B cell (primary cell): ENCODE measurements at regions of chr20 and their contacts with region 1.

Region 1: DNA sequence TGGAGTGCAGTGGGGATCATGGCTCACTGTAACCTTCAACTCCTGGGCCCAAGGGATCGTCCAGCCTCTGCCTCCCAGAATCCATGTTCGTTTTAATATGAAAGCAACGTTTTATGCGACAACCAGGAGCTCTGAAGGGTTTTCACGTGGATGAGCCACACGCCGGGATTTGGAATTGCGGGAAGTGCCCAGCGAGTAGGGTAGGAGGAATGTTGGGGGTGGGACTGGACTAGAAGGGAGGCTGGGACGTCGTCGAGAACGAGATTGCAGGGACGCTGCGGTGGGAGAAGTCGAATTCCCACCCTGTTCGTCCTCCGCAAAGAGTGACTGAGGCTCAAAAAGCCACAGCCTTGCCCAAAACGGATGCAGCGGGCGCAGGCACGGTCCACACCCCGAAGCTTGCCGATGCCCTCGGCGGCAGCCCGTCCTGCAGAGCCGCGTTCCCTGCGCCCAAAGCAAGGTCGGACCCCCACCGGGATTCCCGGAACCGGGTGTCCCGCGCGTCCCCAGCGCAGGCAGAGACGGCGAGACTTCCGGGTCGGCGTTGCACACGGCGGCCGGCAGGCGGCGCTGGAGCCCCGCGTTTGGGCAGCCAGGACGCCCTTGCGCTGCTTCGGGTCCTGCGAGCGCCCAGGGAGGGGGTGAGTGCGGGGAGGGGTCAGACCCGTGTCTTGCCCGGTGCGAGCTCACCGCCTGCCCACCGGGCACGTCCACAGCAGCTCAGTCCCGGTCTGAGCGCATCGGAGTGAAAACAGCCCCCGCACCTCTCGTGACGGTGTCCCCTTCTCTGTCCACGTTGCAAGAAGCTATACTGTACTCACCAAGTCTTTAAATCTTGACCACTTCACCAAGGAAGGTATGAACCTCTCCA is 87.8 kb downstream of the DHX35 start:
- DNase-seq: peak; percentile 87
- ATAC-seq: peak; percentile 89
- H3K4me3 ChIP-seq: peak overlapping the region; percentile 57 to 86 (median 68)
- H3K4me3 Mint-ChIP-seq: peak overlapping the region; percentile 88
- H3K27ac ChIP-seq: peak overlapping the region in 1 of 2 donors; percentile 67
- H3K27ac Mint-ChIP-seq: peak overlapping the region; percentile 46
- H3K4me1 ChIP-seq: peaks cover 8 to 12% of the 10 kb centered on the region in 2 donors
- H3K4me1 Mint-ChIP-seq: peaks cover 10% of the 10 kb centered on the region
- H3K27me3 ChIP-seq: no peaks in the 10 kb centered on the region
- H3K27me3 Mint-ChIP-seq: peaks cover 10% of the 10 kb centered on the region
- CTCF ChIP-seq: peak; percentile 99

Region 2: DNA sequence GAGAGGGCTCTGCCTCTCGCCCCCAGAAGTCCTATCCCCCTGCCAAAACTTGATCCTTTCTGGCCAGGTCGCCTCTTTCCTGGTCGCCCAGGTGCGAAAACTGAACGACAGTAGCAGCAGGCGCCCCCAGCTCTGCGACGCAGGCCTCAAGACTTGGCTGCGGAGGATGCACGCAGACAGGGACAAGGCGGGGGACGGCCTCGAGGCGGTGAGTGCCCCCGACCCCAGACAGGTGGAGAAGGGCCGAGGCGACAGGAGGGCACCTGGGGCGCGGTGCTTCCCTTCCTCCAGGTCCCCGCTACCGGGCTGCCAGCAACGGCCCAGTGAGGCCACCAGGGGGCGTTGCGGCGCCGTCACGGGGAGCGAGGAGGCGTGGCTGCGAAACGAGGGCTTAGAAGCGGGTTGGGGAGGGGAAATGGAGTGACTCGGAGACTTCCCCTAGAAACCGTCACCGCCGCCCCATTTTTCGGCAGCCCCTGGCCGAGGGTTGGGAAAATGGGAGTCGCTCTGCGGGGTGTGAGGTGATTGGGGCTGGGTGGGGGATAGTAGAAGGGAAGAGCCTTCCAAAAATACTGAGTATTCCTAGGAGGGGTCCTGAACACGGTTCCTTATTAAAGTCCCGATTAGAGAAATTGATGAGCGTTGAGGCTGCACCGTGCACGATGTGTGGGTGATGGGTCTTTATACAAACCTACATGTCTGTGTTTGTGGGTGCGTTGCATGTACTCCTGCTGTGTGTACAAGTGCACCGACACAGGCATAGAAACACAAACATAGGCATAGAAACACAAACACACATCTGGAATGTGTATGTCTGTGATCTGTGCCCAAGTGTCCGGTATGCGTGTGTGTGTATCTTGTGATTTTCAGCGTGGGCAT is 403.7 kb before region 1 on chr20:
- CTCF ChIA-PET with region 1: interaction called, 36 read pairs
- POLR2A ChIA-PET with region 1: no interaction called
- intact Hi-C with region 1: loop called (anchors 1 kb)
- DNase-seq: peak; percentile 92
- ATAC-seq: peak; percentile 98
- H3K4me3 ChIP-seq: peak overlapping the region in 4 of 5 experiments; percentile 14 to 42 (median 36)
- H3K4me3 Mint-ChIP-seq: peak overlapping the region; percentile 87
- H3K27ac ChIP-seq: no peak overlapping the region
- H3K27ac Mint-ChIP-seq: no peak overlapping the region
- H3K4me1 ChIP-seq: peaks cover 12 to 13% of the 10 kb centered on the region in 2 donors
- H3K4me1 Mint-ChIP-seq: peaks cover 20% of the 10 kb centered on the region
- H3K27me3 ChIP-seq: peaks cover 0 to 46% (median 21%) of the 10 kb centered on the region in 4 experiments
- H3K27me3 Mint-ChIP-seq: peaks cover 54% of the 10 kb centered on the region
- CTCF ChIP-seq: peak; percentile 99

Region 3: GRCh38 chr20:38926142-38926933 is 123.6 kb before region 1 on chr20 and contains the start of gene FAM83D:
- CTCF ChIA-PET with region 1: interaction called, 12 read pairs
- POLR2A ChIA-PET with region 1: no interaction called
- intact Hi-C with region 1: loop called (anchors 1 kb)
- DNase-seq: peak; percentile 95
- ATAC-seq: peak; percentile 96
- H3K4me3 ChIP-seq: peak within 1 kb of the TSS; percentile 31 to 73 (median 59)
- H3K4me3 Mint-ChIP-seq: peak within 1 kb of the TSS; percentile 82
- H3K27ac ChIP-seq: peak within 1 kb of the TSS in 1 of 2 donors; percentile 49
- H3K27ac Mint-ChIP-seq: peak within 1 kb of the TSS; percentile 75
- H3K4me1 ChIP-seq: peaks cover 6 to 18% of the 10 kb centered on the region in 2 donors
- H3K4me1 Mint-ChIP-seq: peaks cover 27% of the 10 kb centered on the region
- H3K27me3 ChIP-seq: peaks cover 0 to 3% (median 1%) of the 10 kb centered on the region in 4 experiments
- H3K27me3 Mint-ChIP-seq: no peaks in the 10 kb centered on the region
- CTCF ChIP-seq: peak; percentile 34
- total RNA-seq, gene FAM83D: 1.7 and 2.0 TPM in 2 replicates

Region 4: DNA sequence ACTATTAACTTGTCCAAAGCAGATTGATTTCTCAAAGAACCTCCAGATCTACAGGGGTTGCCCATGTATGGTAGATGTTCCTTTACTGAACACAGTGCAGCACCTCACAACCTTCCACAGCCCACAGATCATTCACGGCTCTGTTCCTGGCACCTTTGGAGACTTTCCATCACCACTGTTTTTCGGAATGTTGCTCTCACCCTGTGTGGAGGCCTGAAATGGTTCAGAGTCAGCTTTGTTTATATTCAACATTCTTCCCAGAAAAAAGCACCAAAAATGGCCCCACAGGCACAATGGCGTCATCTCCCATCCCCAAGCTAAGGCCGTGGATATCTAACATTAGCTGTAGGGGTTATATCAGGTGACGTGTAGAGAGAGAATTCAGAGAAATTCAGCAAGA is 13.1 kb before region 1 on chr20:
- CTCF ChIA-PET with region 1: interaction called, 40 read pairs
- POLR2A ChIA-PET with region 1: no interaction called
- intact Hi-C with region 1: no loop called
- DNase-seq: no peak
- ATAC-seq: no peak
- H3K4me3 ChIP-seq: no peak overlapping the region
- H3K4me3 Mint-ChIP-seq: no peak overlapping the region
- H3K27ac ChIP-seq: no peak overlapping the region
- H3K27ac Mint-ChIP-seq: no peak overlapping the region
- H3K4me1 ChIP-seq: no peaks in the 10 kb centered on the region
- H3K4me1 Mint-ChIP-seq: no peaks in the 10 kb centered on the region
- H3K27me3 ChIP-seq: no peaks in the 10 kb centered on the region
- H3K27me3 Mint-ChIP-seq: no peaks in the 10 kb centered on the region
- CTCF ChIP-seq: no peak

Region 5: GRCh38 chr20:39081255-39081654 is 31.3 kb after region 1 on chr20:
- CTCF ChIA-PET with region 1: interaction called, 225 read pairs
- POLR2A ChIA-PET with region 1: no interaction called
- intact Hi-C with region 1: loop called (anchors 1 kb)
- DNase-seq: peak; percentile 76
- ATAC-seq: peak; percentile 78
- H3K4me3 ChIP-seq: no peak overlapping the region
- H3K4me3 Mint-ChIP-seq: no peak overlapping the region
- H3K27ac ChIP-seq: no peak overlapping the region
- H3K27ac Mint-ChIP-seq: no peak overlapping the region
- H3K4me1 ChIP-seq: no peaks in the 10 kb centered on the region
- H3K4me1 Mint-ChIP-seq: no peaks in the 10 kb centered on the region
- H3K27me3 ChIP-seq: peaks cover 0 to 13% (median 2%) of the 10 kb centered on the region in 4 experiments
- H3K27me3 Mint-ChIP-seq: peaks cover 52% of the 10 kb centered on the region
- CTCF ChIP-seq: peak; percentile 94

Region 6: GRCh38 chr20:39117491-39117890 is 67.6 kb after region 1 on chr20:
- CTCF ChIA-PET with region 1: no interaction called
- POLR2A ChIA-PET with region 1: no interaction called
- intact Hi-C with region 1: no loop called
- DNase-seq: no peak
- ATAC-seq: no peak
- H3K4me3 ChIP-seq: no peak overlapping the region
- H3K4me3 Mint-ChIP-seq: no peak overlapping the region
- H3K27ac ChIP-seq: no peak overlapping the region
- H3K27ac Mint-ChIP-seq: no peak overlapping the region
- H3K4me1 ChIP-seq: no peaks in the 10 kb centered on the region
- H3K4me1 Mint-ChIP-seq: no peaks in the 10 kb centered on the region
- H3K27me3 ChIP-seq: peaks cover 0 to 7% (median 1%) of the 10 kb centered on the region in 4 experiments
- H3K27me3 Mint-ChIP-seq: peaks cover 47% of the 10 kb centered on the region
- CTCF ChIP-seq: no peak